ENCODE measurements at regions of chr3 and their contacts with region 1.

Region 1: DNA sequence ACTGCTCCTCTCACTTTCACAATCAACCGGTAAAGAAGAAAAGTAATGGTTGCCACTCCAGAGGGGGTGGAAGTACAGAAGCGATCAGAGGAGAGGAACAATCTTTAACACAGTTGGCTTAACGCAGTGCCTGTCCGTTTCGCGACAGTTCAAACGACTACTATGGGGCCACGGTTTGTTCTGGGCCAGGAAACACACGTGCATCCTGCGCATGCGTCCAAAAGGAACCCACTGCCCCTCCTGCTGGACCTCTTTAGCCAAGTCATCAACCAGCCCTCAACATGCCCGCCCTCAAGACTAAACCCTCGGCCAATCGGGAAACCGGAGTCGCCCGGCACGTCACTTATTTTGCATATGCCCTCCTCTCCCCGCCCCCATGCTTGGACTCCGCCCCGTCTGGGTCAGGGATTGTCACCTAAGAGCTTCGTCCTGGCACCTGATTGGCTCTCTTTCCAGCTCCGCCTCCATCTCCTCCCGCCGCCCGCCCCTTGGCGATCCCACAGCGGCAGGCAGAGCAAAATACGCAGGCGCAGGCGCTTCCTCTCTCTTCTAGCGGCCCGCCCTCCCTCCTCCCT is 345 bp upstream of the CDV3 start:
- DNase-seq: peak; percentile 100
- ATAC-seq: peak; percentile 92 to 98 (median 96)
- H3K4me3 ChIP-seq: peak overlapping the region in 9 of 10 donors; percentile 66 to 91 (median 82)
- H3K27ac ChIP-seq: peak overlapping the region; percentile 94 to 98 (median 96)
- H3K4me1 ChIP-seq: peaks cover 5 to 74% (median 53%) of the 10 kb centered on the region in 9 donors
- H3K27me3 ChIP-seq: no peaks in the 10 kb centered on the region
- CTCF ChIP-seq: peak in 6 of 9 donors; percentile 7 to 48 (median 34)

Region 2: DNA sequence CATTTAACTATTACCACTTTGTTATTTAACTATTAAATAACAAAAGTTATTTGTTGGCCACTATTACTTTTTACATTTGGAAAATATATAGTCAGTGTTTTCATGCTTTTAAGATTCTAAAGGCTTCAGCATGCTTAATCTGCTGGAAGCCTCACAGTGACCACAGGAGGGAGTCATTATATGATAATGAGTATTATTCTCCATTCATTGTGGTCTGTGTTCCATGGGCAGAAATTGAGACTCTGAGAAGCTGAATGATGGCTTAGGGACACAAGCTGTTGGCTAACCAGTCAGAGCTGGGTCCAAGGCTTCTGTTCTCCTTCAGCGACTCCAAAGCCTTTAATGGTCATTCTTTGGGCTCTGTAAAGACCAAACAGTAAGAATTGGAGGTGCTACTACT is 108.6 kb before region 1 on chr3:
- intact Hi-C with region 1: loop called in 3 of 10 experiments (anchors 5 to 10 kb)
- DNase-seq: no peak
- ATAC-seq: no peak
- H3K4me3 ChIP-seq: no peak overlapping the region
- H3K27ac ChIP-seq: no peak overlapping the region
- H3K4me1 ChIP-seq: peaks cover 0 to 27% (median 12%) of the 10 kb centered on the region in 9 donors
- H3K27me3 ChIP-seq: peaks cover 0 to 4% (median 0%) of the 10 kb centered on the region in 7 donors
- CTCF ChIP-seq: peak in 6 of 9 donors; percentile 15 to 40 (median 26)

Region 3: GRCh38 chr3:133475245-133476010 is 97.7 kb before region 1 on chr3:
- intact Hi-C with region 1: loop called in 3 of 10 experiments (anchors 5 to 10 kb)
- DNase-seq: no peak
- ATAC-seq: no peak
- H3K4me3 ChIP-seq: no peak overlapping the region
- H3K27ac ChIP-seq: peak overlapping the region in 9 of 10 donors; percentile 53 to 74 (median 66)
- H3K4me1 ChIP-seq: peaks cover 7 to 19% (median 16%) of the 10 kb centered on the region in 9 donors
- H3K27me3 ChIP-seq: no peaks in the 10 kb centered on the region
- CTCF ChIP-seq: no peak

Measured in heart right ventricle (tissue), 16 donors.